Right cardiac atrium (tissue), 5 donors: ENCODE measurements at regions of chr5 and their contacts with region 1.

Region 1: GRCh38 chr5:180470966-180471582 is 23.1 kb upstream of the CNOT6 start:
- DNase-seq: peak in 2 of 3 donors; percentile 38 to 80
- ATAC-seq: peak; percentile 65 to 73
- H3K4me3 ChIP-seq: no peak overlapping the region
- H3K27ac ChIP-seq: no peak overlapping the region
- H3K4me1 ChIP-seq: no peaks in the 10 kb centered on the region
- H3K27me3 ChIP-seq: no peaks in the 10 kb centered on the region

Region 2: GRCh38 chr5:180034564-180034963 is 436.5 kb before region 1 on chr5:
- intact Hi-C with region 1: no loop called
- DNase-seq: no peak
- ATAC-seq: no peak
- H3K4me3 ChIP-seq: no peak overlapping the region
- H3K27ac ChIP-seq: no peak overlapping the region
- H3K4me1 ChIP-seq: no peaks in the 10 kb centered on the region
- H3K27me3 ChIP-seq: no peaks in the 10 kb centered on the region

Region 3: DNA sequence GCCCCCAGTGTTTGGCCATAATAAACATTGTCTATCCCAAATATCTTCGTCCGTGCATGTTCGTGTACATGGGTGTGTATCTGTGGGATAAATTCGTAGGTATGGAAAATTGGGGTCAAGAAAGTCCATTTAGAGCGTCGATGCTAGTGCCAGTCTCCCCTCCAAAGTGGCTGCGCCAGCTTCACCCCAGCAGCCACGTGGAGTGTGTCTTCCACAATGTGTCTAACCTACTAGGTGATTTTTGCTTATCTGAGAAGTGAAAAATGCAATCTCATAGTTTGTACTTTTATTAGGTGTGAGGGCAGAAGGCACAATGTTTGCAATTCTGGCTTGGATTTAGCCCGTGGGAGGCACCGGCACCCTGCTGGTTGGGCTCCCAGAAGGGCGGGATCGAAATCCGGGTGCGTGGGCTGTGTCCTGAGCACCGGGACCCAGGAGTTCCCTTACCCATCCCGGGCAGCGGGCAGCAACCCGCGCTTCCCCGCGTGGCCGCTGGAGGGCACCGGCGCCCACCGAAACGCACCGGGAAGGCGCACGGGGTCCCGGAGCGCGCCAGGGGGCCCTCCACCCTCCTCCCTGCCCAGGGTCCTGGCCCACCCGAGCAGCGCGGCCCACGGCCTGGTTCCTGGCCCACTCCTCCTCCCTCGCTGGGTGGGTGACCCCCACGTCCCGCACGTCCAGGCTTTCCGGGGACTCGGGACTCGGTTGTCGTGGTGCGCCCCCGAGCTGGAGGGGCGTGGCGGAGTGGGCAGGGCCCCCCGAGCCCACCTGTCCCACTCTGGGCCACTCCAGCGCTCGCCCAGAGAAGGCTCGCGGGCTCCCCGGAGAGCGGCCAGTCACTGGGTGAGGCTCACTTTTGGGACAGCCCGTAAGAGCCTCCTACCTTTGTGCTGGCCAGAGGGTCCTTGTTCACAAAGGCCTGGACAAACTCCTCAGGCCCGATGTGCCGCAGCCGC is 344.1 kb before region 1 on chr5:
- intact Hi-C with region 1: loop called in 1 of 4 experiments (anchors 10 kb)
- DNase-seq: peak in 2 of 3 donors; percentile 69
- ATAC-seq: peak; percentile 63 to 64
- H3K4me3 ChIP-seq: no peak overlapping the region
- H3K27ac ChIP-seq: no peak overlapping the region
- H3K4me1 ChIP-seq: no peaks in the 10 kb centered on the region
- H3K27me3 ChIP-seq: no peaks in the 10 kb centered on the region

Region 4: DNA sequence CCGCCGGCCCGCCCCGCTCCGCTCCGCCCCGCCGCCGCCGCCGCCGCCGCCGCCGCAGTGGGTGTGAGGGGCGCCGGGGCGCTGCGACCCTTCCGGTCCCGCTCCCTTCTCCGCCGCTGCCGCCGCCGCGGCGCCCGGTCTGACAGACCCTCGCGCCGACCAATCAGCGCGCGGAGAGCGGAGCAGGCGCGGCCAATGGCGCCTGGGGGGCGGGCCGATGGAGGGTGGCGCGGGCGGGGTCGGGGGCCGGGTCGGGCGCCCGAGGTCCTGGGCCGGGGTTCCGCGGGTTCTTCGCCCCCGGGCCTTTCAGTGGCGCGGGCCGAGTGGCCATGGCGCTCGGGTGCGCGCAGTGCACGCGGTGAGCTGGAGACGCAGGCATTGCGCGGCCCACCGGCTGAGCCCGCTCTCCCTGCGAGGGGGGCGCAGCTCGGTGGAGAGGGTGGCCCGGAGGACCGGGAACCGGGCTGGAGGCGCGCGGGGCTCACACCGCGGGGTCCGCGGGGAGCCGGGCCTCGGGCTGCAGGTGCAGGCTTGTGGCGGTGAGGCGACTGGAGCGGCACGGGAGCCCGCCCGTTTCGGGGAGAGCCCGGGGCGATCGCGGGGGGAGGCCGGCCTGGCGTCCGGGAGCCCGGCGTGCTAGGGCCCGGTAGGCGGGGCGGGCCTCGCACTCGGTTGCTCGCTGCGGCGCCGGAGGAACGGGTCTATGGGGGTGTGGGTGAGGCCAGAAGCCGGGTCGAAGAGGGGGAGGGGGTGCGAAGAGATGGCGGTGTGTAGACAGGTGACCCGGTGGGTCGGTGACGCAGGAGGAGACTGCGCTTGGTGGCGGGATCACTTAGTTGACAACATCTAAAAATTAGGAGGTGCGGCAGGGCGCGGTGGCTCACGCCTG is 178.9 kb before region 1 on chr5 and contains the start of gene MAPK9:
- intact Hi-C with region 1: loop called (anchors 2 to 10 kb)
- DNase-seq: peak; percentile 86 to 95 (median 94)
- ATAC-seq: peak; percentile 93 to 94
- H3K4me3 ChIP-seq: peak within 1 kb of the TSS; percentile 92
- H3K27ac ChIP-seq: peak within 1 kb of the TSS; percentile 93
- H3K4me1 ChIP-seq: peaks cover 2% of the 10 kb centered on the region
- H3K27me3 ChIP-seq: no peaks in the 10 kb centered on the region
- total RNA-seq, gene MAPK9: 43.6 to 47.4 (median 46.1) TPM